ENCODE measurements at regions of chr17 and their contacts with region 1.

Region 1: DNA sequence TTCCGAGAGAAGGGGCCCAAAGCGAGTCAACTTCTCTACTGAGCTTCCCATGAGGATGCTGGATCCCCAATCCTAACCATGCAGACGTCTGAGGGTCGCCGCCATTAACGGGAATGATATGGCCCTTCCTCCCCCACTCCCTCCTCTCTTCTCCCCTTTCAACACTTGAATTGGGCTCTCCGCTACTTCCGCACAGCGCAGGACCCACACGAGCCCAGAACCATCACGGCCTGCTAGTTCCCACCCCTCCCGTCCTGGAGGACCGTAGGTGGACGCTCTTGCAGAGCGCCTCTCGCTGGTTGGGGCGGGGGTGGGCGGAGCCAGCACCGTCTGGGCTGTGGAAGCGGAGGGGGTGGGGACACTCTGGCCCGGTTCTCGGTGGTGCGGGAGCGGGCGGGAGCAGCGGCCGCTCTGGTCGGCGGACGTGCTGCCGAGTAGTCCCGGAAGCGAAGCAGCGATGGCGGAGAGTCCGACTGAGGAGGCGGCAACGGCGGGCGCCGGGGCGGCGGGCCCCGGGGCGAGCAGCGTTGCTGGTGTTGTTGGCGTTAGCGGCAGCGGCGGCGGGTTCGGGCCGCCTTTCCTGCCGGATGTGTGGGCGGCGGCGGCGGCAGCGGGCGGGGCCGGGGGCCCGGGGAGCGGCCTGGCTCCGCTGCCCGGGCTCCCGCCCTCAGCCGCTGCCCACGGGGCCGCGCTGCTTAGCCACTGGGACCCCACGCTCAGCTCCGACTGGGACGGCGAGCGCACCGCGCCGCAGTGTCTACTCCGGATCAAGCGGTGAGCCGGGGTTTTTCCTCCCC is at the start of gene UBE2Z:
- DNase-seq: peak; percentile 92 to 95
- ATAC-seq: peak; percentile 97 to 99 (median 98)
- H3K4me3 ChIP-seq: peak within 1 kb of the TSS; percentile 59 to 99 (median 83)
- H3K27ac ChIP-seq: peak within 1 kb of the TSS; percentile 82 to 97 (median 93)
- H3K4me1 ChIP-seq: peaks cover 0 to 47% (median 33%) of the 10 kb centered on the region in 9 donors
- H3K27me3 ChIP-seq: no peaks in the 10 kb centered on the region
- CTCF ChIP-seq: peak in 5 of 9 donors; percentile 19 to 58 (median 35)
- total RNA-seq, gene UBE2Z: 31.4 to 47.5 (median 38.8) TPM

Region 2: GRCh38 chr17:48892940-48893645 is 15.2 kb before region 1 on chr17:
- intact Hi-C with region 1: loop called in 4 of 10 experiments (anchors 1 to 2 kb)
- DNase-seq: peak in 1 of 2 donors; percentile 25
- ATAC-seq: peak in 2 of 8 donors; percentile 3 to 27
- H3K4me3 ChIP-seq: peak overlapping the region; percentile 70 to 91 (median 77)
- H3K27ac ChIP-seq: peak overlapping the region; percentile 57 to 93 (median 88)
- H3K4me1 ChIP-seq: peaks cover 0 to 29% (median 24%) of the 10 kb centered on the region in 9 donors
- H3K27me3 ChIP-seq: no peaks in the 10 kb centered on the region
- CTCF ChIP-seq: no peak

Region 3: DNA sequence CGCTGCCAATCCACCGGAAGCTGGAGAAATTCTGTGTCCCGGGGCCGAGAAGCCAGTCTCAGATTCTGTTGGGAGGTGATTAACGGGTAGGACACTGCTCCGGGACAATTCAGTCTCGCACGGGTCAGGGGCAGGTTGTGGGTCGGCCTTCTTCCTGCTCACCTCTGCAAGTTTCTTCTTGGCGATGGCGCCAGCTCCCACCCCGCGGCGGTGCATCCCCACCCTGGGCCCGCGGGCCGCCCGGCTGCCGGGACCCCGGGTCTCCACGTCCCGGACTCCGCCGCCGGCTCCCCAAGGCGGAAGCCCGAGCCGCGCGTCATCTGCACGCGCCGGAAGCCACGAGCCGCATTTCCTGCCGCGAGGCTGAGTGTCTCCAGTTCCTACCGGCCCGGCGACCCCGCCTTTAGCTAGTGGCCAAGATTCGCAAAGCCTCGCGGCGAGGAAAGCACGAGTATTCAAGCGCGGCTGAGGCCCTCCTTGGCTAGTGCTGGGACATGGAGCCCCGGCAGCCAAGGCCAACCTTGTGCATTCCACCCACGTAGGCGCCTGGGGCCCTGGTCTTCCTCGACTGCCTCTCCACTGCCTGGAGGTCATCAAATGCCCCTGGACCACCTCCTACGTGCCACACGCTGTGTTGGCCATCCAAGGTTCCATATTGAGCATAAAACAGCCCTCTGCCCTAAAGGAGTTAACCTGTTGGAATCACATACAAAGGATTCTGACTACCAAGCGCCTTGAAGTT is 36.4 kb after region 1 on chr17 and contains the start of gene SNF8:
- intact Hi-C with region 1: loop called in 4 of 10 experiments (anchors 2 to 5 kb)
- DNase-seq: peak; percentile 92
- ATAC-seq: peak; percentile 95 to 99 (median 97)
- H3K4me3 ChIP-seq: peak within 1 kb of the TSS; percentile 56 to 96 (median 80)
- H3K27ac ChIP-seq: peak within 1 kb of the TSS; percentile 79 to 97 (median 87)
- H3K4me1 ChIP-seq: peaks cover 4 to 26% (median 21%) of the 10 kb centered on the region in 9 donors
- H3K27me3 ChIP-seq: peaks cover 0 to 5% (median 0%) of the 10 kb centered on the region in 7 donors
- CTCF ChIP-seq: no peak
- total RNA-seq, gene SNF8: 90.0 to 111 (median 104) TPM

Region 4: DNA sequence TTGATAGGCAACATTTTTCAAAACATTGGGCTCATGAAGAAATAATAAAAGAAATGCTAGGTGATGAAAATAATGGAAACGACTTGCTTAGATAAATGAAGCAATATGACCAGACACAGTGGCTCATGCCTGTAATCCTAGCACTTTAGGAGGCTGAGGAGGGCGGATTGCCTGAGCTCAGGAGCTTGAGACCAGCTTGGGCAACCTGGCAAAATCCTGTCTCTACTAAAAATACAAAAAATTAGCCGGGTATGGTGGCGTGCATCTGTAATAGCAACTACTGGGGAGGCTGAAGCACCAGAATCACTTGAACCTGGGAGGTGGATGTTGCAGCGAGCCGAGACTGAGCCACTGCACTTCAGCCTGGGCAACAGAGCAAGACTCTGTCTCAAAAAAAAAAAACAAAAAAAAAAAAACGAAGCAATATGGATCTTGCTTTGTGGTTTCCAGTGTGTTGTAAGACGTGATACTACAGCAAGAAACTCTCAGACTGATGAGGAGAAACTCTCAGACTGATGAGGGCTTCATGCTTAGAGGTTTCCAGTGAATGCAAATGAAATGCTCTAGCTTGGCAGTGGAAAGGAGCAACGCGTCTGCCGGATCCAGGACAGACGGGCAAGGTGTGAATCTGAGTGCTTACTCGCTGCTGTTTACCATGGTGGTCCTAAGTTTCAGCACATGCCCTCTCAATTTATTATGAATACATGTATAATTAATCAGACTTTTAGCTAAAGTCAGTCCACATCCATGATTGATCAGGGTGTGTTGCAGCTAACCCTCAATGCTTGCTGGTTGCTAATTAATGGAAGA is 77.4 kb after region 1 on chr17:
- intact Hi-C with region 1: no loop called
- DNase-seq: no peak
- ATAC-seq: no peak
- H3K4me3 ChIP-seq: no peak overlapping the region
- H3K27ac ChIP-seq: no peak overlapping the region
- H3K4me1 ChIP-seq: no peaks in the 10 kb centered on the region
- H3K27me3 ChIP-seq: peaks cover 0 to 94% (median 88%) of the 10 kb centered on the region in 7 donors
- CTCF ChIP-seq: no peak

Measured in heart right ventricle (tissue), 16 donors.